A549 (cell line): ENCODE measurements at regions of chrX and their contacts with region 1.

Region 1: DNA sequence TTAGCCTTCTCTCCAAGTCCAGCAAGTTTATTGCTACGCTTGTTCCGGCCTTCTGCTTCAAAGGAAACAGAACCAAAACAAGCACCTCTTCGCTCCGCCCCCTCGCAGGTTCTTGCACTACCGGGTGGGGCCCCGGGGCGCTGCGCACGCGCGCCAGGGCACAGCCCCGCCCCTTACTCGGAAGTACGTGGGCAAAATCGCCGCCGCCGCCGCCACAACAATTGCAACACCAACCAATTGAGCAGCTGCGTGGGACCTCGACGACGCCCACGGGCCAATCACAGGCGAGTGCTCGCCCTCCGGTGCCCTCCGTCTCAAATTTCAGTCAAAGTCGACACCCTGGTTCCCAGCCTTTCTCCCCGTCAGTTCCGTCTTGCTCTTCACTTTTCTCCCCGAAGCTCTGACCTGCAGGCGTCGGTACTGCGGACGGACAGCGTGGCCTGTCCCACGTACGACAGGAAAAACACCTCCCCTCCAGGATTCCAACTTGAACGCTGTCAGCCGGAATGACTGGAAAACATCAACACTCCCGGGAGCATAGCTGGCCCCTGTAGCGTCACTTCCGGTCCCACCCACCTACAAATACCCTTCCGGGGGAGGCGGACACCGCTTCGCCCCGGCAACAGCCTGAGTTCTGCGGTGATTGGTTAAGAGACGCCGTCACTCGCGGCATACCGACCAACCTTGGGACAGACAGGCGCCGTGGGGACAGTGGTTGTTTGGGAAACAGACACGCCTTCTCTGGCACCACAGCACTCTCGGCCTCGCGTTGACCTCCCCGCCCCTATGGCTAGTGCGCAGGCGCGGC is 624 bp upstream of the OTUD5 start:
- DNase-seq: peak; percentile 96 to 99
- ATAC-seq: peak; percentile 94 to 95
- H3K4me3 ChIP-seq: peak overlapping the region; percentile 98
- H3K27ac ChIP-seq: peak overlapping the region; percentile 82 to 99
- H3K4me1 ChIP-seq: peaks cover 19% of the 10 kb centered on the region
- CTCF ChIP-seq: no peak
- EP300 ChIP-seq: no peak
- POLR2A ChIP-seq: peak; percentile 27; the same call in 1 of the 2 replicates
- RAD21 ChIP-seq: no peak

Region 2: DNA sequence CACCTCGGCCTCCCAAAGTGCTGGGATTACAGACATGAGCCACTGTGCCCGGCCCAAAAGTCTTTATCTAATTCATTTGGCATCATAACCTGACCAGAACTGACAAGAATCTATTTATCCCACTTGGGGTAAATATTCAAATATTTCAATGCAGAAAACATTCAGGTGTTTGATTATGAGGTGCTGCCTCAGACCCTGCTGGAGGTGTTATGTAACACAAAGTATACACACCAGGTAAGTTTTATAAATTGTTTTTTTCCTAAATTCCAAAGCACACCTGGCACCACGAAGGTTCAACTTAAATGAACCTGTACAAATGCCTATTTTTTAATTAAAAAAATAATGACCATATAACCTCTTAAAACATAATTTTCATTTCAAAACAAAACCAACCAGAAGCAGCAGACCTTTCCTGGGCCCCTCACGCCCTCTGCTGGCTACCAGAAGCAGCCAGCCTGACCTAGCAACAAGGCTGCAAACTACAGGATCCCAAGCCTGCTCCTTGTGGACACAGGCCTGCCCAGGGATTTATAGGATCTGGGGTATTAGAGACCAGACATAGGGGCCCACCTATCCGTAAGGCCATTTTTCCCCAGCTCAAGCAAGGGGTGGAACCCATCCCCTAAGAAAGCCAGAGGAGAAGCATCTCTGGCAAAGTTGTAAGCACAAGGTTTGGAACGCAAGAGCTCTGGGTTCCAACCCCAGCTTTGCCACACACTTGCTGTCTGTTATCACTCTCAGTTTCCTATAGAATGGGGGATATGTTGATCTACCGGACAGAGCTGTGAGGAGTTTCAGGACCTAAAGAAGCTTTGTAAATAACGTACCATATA is 12.3 kb before region 1 on chrX:
- CTCF ChIA-PET with region 1: interaction called, 20 read pairs
- POLR2A ChIA-PET with region 1: interaction called, 4 read pairs
- DNase-seq: peak; percentile 61 to 62
- ATAC-seq: peak; percentile 92 to 96
- H3K4me3 ChIP-seq: no peak overlapping the region
- H3K27ac ChIP-seq: no peak overlapping the region
- H3K4me1 ChIP-seq: no peaks in the 10 kb centered on the region
- CTCF ChIP-seq: peak; percentile 78
- EP300 ChIP-seq: no peak
- POLR2A ChIP-seq: no peak
- RAD21 ChIP-seq: peak; percentile 64 to 71

Region 3: DNA sequence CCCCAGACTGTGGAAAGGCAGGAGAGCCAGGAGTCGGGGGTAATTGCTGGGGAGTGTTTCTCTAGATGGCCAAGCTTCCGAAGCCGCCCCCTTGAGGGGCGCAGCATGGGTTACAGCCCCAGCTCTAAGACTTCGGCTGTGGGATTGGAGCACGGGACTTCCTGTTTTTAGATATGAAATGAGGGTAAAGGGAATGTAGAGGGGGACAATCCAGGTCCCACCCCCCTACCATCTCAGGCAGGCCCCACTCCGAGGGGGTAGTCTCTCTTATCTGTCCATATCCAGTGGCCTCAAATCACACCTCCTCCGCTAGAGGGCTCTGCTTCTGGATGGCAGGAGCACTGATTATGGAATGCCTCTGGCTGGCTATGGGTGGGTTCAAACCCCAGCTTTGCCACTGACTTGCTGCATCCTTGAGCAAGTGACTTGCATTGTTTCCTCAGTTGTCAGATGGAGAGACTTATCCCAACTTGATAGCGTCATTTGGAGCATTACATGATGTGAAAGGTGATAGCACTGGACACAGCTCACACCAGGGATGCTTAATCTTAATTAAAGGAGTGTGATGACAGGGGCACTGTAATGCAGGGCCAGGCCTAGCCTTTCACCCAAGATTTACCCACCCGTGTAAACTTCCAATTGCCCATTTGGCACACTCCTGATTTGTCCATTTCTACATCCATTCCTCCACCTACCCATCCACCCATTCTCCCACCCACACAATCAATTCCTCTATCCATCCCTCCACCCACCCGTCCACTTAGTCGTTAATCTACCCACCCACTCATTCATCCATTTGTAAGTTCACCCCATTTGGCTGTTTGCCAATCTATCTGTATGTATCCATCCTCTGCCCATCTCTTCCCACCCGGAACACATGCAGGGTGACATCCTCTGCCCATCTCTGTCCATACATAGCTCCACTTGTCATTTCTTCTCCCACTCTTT is 14.5 kb after region 1 on chrX:
- CTCF ChIA-PET with region 1: interaction called, 17 read pairs
- POLR2A ChIA-PET with region 1: interaction called, 5 read pairs
- DNase-seq: peak; percentile 54 to 60
- ATAC-seq: peak; percentile 72 to 88
- H3K4me3 ChIP-seq: peak overlapping the region; percentile 0; the same call in 1 of the 3 replicates
- H3K27ac ChIP-seq: peak overlapping the region in 1 of 2 experiments; percentile 70; a peak in 3 of 6 replicates
- H3K4me1 ChIP-seq: peaks cover 11% of the 10 kb centered on the region
- CTCF ChIP-seq: peak; percentile 60
- EP300 ChIP-seq: no peak
- POLR2A ChIP-seq: no peak
- RAD21 ChIP-seq: peak; percentile 35 to 40; a peak in 4 of 5 replicates

Region 4: GRCh38 chrX:49002091-49002935 is 44.3 kb after region 1 on chrX and contains the start of gene GRIPAP1:
- CTCF ChIA-PET with region 1: no interaction called
- POLR2A ChIA-PET with region 1: interaction called, 12 read pairs
- DNase-seq: peak; percentile 85 to 93
- ATAC-seq: peak; percentile 88 to 92
- H3K4me3 ChIP-seq: peak within 1 kb of the TSS; percentile 75
- H3K27ac ChIP-seq: peak within 1 kb of the TSS; percentile 94 to 98
- H3K4me1 ChIP-seq: peaks cover 5% of the 10 kb centered on the region; the same call in 1 of the 3 replicates
- CTCF ChIP-seq: no peak
- EP300 ChIP-seq: no peak
- POLR2A ChIP-seq: peak; percentile 69
- RAD21 ChIP-seq: no peak
- polyA plus RNA-seq, gene GRIPAP1: 33.7 and 35.1 TPM in 2 replicates

Region 5: DNA sequence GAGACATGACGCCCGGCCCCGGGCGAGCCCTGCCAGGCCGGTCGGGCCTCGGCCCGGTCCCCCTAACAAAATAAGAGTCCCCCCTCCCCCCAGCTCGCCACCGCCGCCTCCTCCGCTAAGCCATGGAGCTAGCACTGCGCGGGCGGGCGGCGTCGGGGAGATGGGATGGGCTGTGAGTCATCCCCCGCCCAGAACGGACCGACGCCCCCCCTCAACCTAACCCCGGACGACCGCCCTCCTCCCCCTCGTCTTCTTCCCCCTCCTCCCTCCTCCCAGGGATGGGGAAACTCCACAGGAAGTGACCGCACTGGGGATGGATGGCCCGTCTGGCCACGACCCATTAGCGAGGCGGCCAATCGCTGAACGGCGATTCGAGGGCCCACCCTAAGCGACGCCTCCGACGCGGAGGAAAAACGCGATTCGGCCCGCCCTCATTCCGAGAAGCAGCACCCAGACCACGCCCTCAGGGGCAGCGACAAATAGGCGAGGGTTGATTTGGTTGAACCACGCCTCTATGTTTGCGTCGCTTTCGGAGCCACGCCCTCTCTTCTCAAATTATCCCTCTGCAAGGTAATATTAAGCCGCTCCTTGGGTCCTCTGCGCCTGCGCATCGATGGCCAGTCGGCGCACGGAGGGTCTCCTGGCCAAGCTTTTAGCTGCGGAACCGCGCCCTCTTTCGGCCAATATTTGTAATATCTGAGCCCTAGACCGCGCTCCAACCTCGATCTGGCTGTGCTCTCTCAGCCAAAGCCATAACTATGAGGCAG is 85.4 kb after region 1 on chrX and contains the start of gene TFE3:
- CTCF ChIA-PET with region 1: interaction called, 9 read pairs
- POLR2A ChIA-PET with region 1: interaction called, 40 read pairs
- DNase-seq: peak; percentile 91 to 99
- ATAC-seq: peak; percentile 78 to 88
- H3K4me3 ChIP-seq: peak within 1 kb of the TSS; percentile 93
- H3K27ac ChIP-seq: peak within 1 kb of the TSS; percentile 99 to 100
- H3K4me1 ChIP-seq: peaks cover 17% of the 10 kb centered on the region
- CTCF ChIP-seq: peak; percentile 70
- EP300 ChIP-seq: no peak
- POLR2A ChIP-seq: 0 out of 2 replicates have a peak, but pooled peaks have one; percentile 31
- RAD21 ChIP-seq: peak; percentile 83 to 85
- polyA plus RNA-seq, gene TFE3: 16.1 and 27.3 TPM in 2 replicates

Region 6: GRCh38 chrX:49922291-49923241 is 964.5 kb after region 1 on chrX and contains the start of gene CLCN5:
- CTCF ChIA-PET with region 1: no interaction called
- POLR2A ChIA-PET with region 1: interaction called, 13 read pairs
- DNase-seq: peak; percentile 85 to 94
- ATAC-seq: peak; percentile 97 to 98
- H3K4me3 ChIP-seq: peak within 1 kb of the TSS; percentile 90
- H3K27ac ChIP-seq: peak within 1 kb of the TSS; percentile 84 to 88
- H3K4me1 ChIP-seq: peaks cover 6% of the 10 kb centered on the region; the same call in 2 of the 3 replicates
- CTCF ChIP-seq: no peak
- EP300 ChIP-seq: no peak
- POLR2A ChIP-seq: peak; percentile 55
- RAD21 ChIP-seq: no peak
- polyA plus RNA-seq, gene CLCN5: 5.2 and 6.9 TPM in 2 replicates